ENCODE measurements at regions of chr16 and their contacts with region 1.

Region 1: GRCh38 chr16:30526823-30527635 is 663 bp upstream of the ZNF768 start:
- DNase-seq: peak; percentile 99
- ATAC-seq: peak; percentile 92

Region 2: DNA sequence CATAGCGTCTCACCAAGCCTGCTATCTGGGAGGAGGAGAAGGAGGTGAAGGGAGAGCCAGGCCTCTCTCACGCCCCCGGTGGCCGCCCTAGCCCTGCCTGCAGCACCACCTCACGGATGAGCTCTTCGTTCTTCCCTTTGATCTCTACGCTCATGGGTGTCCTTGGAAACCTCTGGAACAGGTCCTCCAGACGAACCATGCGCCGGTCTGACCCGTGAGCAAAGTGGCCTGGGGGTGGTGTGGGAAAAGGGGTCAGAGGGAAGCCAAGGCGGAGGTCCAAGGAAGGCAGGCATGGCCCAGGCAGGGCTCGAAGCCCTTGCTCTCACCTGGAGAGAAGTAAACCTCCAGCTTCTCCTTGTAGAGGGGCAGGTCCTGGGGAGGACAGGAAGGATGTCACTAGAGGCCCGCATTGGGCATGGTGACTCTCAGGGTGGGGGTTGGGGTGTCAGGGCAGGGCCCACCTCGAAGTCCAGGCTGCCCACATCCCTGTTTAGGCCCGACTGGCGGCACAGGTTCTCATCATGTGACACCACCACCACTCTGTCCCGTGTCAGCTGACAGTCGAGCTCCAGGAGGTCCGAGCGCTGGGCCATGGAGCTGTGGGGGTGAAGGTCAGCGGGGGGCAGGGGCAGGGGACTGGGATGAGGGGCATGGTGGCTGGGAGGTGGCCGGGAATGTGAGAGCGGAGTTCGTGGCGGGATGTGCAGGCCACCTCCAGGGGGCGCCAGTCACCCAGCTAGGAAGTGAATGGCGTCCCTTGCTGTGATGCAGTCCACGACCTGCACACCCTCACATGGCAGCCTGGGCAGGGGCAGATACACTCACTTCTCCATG is 414.6 kb before region 1 on chr16:
- intact Hi-C with region 1: no loop called
- DNase-seq: peak; percentile 80
- ATAC-seq: peak; percentile 50

Region 3: DNA sequence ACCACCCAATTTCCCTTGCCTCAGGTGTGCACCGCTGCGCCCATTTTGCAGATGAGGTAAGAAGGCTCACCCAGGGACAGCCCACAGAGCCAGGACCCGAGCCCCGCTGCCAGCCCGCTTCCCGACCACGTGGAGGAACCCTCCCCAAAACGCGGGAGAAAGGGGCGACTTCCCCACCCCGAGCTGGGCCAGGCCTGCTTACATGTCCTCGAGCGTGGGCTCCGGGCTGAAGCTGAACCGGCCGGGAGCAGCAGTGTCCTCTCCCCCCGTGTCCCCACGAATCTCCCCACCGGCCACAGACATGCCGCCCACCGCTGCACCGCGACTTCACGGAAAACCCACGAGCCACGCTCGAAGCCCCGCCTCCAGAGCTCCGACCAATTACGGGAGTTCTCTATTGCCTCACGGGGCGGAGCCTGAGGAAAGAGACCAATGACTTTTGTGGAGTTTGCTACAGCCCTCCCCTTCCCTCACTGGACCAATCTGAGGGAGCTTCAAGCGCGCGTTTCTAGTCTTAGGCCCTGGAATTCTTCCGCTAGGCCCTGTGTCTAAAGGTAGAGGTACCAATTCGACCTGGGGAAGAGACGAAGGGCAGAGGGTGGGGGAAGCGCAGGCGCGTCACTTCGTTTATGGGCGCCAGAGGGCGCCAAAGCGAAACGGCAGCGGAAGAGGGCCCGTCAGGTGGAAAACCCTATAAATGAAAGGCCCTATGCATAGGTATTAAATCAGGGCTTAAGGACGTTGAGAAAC is 97.2 kb before region 1 on chr16 and contains the start of gene DCTPP1:
- intact Hi-C with region 1: no loop called
- DNase-seq: peak; percentile 96
- ATAC-seq: peak; percentile 98
- total RNA-seq, gene DCTPP1: 38.4 TPM

Region 4: GRCh38 chr16:30445408-30446202 is 81.4 kb before region 1 on chr16 and contains the start of gene SEPHS2:
- intact Hi-C with region 1: loop called (anchors 10 kb)
- DNase-seq: peak; percentile 100
- ATAC-seq: peak; percentile 98
- total RNA-seq, gene SEPHS2: 28.6 TPM

Region 5: DNA sequence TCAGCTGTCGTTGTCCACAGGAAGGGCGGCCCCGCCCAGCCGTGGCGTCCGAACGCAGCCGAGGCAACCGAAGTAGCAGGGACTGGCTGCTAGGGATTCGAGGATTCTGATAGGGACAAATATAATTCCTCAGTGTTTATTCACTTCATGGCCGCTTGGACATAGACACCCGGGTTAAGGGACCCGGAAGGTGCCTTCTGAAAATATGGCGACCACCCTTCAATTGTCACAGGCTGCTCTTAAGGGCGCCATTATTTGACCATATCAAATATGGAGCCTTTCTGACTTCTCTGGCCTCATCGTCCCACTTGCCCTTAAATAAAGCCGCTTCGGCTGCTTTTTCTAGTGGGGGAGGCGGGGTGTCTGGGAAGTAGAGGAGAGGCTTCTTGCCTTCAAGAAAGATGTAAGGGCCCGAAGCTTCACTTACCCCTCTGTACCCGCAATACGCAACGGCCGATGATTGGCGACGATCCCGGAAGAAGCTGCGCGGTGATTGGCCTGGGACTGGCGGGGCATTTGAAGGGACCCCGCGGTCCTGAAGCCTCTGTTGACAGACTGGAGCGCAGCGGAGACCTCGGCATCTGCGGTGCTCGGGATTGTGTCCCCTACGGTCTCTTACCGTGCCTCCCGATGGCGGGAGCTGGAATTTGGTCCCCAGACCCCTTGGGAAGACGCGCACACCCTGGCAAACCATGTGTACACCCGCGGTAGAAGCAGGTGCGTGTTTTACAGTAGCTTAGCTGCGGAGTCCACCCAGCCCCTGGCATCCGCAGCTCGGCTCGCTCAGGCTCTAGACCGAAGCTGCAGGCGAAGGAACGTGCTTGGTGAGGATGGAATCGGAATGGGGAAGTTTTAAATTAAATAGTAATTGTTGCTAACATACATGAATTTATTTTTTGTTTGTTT is 44.9 kb after region 1 on chr16 and contains the start of gene ZNF688:
- intact Hi-C with region 1: loop called (anchors 5 kb)
- DNase-seq: peak; percentile 96
- ATAC-seq: peak; percentile 90
- total RNA-seq, gene ZNF688: 12.2 TPM

Measured in Right ventricle myocardium superior (tissue), 1 donor.